OCI-LY7 (cell line): ENCODE measurements at regions of chr5 and their contacts with region 1.

Region 1: GRCh38 chr5:143824851-143825720 is 13.1 kb downstream of the HMHB1 start:
- DNase-seq: peak; percentile 86
- H3K4me3 ChIP-seq: no peak overlapping the region
- H3K27ac ChIP-seq: no peak overlapping the region
- H3K4me1 ChIP-seq: peaks cover 8% of the 10 kb centered on the region
- CTCF ChIP-seq: peak; percentile 97

Region 2: GRCh38 chr5:142922223-142922952 is 902.7 kb before region 1 on chr5:
- CTCF ChIA-PET with region 1: no interaction called
- POLR2A ChIA-PET with region 1: no interaction called
- intact Hi-C with region 1: loop called (anchors 1 kb)
- DNase-seq: peak; percentile 64
- H3K4me3 ChIP-seq: no peak overlapping the region
- H3K27ac ChIP-seq: no peak overlapping the region
- H3K4me1 ChIP-seq: no peaks in the 10 kb centered on the region
- CTCF ChIP-seq: peak; percentile 81

Region 3: GRCh38 chr5:143014017-143014651 is 811.0 kb before region 1 on chr5:
- CTCF ChIA-PET with region 1: no interaction called
- POLR2A ChIA-PET with region 1: no interaction called
- intact Hi-C with region 1: loop called (anchors 1 kb)
- DNase-seq: peak; percentile 45
- H3K4me3 ChIP-seq: no peak overlapping the region
- H3K27ac ChIP-seq: no peak overlapping the region
- H3K4me1 ChIP-seq: no peaks in the 10 kb centered on the region
- CTCF ChIP-seq: peak; percentile 76

Region 4: GRCh38 chr5:143106174-143106573 is 718.9 kb before region 1 on chr5:
- CTCF ChIA-PET with region 1: no interaction called
- POLR2A ChIA-PET with region 1: no interaction called
- intact Hi-C with region 1: loop called (anchors 10 kb)
- DNase-seq: peak; percentile 24
- H3K4me3 ChIP-seq: no peak overlapping the region
- H3K27ac ChIP-seq: no peak overlapping the region
- H3K4me1 ChIP-seq: no peaks in the 10 kb centered on the region
- CTCF ChIP-seq: peak; percentile 35; the same call in 1 of the 2 replicates

Region 5: DNA sequence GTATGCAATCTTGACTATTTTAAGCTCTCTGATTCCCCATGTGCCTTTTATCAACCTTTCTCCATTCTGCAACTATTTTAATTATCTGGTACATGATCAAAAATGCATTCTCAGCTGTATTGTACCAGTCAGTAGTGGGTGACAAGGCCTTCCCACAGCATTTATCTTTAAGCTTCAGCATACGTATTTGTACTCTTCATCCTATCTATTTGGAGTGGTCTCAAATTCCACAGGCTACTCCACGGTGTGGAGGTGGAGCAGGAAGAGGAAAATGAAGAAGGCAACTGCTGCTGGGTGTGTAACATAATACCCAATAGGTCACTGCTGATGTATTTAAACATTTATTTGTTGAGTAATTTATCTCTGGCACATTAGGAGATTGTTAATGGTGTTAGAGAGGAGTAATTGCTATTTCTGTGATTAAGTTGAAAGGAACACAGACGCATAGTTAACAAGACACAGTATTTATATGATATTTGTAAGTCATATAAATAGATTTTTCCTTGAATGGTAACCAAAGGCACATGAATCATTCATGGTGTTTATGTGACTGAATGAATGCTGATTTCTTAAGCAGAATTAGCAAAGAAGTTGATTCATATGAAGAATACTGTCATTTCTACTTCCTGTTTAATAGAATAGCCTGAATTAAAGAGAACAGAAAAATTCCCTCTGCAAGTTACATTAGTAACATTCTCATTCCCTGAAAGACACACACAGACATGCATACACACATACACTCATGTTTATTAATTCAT is 267.8 kb before region 1 on chr5:
- CTCF ChIA-PET with region 1: no interaction called
- POLR2A ChIA-PET with region 1: no interaction called
- intact Hi-C with region 1: no loop called
- DNase-seq: no peak
- H3K4me3 ChIP-seq: no peak overlapping the region
- H3K27ac ChIP-seq: no peak overlapping the region
- H3K4me1 ChIP-seq: no peaks in the 10 kb centered on the region
- CTCF ChIP-seq: no peak